ENCODE measurements at regions of chr12 and their contacts with region 1.

Region 1: GRCh38 chr12:85041395-85041794 is 5.2 kb downstream of the LRRIQ1 start:
- DNase-seq: no peak
- H3K4me3 ChIP-seq: no peak overlapping the region
- H3K27ac ChIP-seq: no peak overlapping the region
- H3K27me3 ChIP-seq: no peaks in the 10 kb centered on the region
- CTCF ChIP-seq: no peak

Region 2: DNA sequence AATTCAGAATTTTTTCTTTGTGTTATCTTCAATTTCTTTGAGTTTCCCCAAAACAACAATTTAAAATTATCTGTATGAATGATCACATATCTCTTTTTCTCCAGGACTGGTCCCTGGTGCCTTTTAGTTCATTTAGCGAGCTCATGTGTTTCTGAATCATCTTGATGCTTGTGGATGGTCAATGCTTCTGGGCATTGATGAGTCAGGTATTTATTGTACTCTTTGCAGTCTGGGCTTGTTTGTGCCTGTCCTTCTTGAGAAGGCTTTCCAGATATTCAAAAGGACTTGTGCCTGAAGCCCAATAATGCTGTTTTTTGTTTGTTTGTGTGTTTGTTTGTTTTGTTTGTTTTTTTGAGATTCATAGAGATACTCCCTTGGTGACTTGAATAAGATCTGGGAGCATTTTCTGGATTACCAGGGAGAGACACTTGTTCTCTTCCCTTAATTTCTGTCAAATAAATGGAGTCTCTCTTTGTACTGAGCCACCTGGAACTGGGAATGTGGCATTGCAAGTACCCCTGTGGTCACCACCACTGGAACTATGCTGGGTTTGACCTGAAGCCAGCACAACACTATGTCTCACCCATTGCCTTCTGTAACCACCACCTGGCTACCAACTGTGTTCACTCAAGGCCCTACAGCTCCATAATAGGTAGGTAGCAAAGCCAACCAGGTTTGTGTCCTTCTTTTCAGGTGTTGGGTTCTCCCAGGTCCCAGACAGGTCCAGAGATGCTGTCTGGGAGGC is 185.1 kb before region 1 on chr12:
- CTCF ChIA-PET with region 1: no interaction called
- POLR2A ChIA-PET with region 1: no interaction called
- DNase-seq: no peak
- H3K4me3 ChIP-seq: no peak overlapping the region
- H3K27ac ChIP-seq: no peak overlapping the region
- H3K27me3 ChIP-seq: no peaks in the 10 kb centered on the region
- CTCF ChIP-seq: no peak

Region 3: GRCh38 chr12:84986586-84986985 is 54.8 kb before region 1 on chr12:
- CTCF ChIA-PET with region 1: no interaction called
- POLR2A ChIA-PET with region 1: no interaction called
- DNase-seq: no peak
- H3K4me3 ChIP-seq: no peak overlapping the region
- H3K27ac ChIP-seq: no peak overlapping the region
- H3K27me3 ChIP-seq: no peaks in the 10 kb centered on the region
- CTCF ChIP-seq: no peak

Region 4: GRCh38 chr12:85057370-85057963 is 16.1 kb after region 1 on chr12:
- CTCF ChIA-PET with region 1: interaction called, 34 read pairs
- POLR2A ChIA-PET with region 1: no interaction called
- DNase-seq: peak; percentile 13
- H3K4me3 ChIP-seq: no peak overlapping the region
- H3K27ac ChIP-seq: no peak overlapping the region
- H3K27me3 ChIP-seq: no peaks in the 10 kb centered on the region
- CTCF ChIP-seq: peak; percentile 84

Region 5: DNA sequence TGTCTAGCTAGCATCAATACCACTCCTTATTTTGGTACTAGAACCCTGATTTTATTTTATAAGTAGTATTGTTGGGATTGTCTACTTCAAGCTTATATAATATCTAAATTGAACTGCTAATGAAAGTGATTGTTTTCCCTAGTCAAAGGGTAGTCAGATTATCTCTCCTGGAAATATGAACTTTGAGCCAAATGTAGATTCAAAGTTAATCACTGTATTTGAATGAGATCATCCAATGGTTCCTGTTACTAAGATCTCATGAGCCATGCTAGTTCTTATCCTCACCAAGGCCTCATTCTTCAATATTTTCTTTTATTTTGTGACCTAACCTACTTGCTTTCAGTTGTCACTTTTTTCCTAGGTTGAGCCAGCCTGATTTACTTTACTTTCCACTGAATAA is 518.1 kb after region 1 on chr12:
- CTCF ChIA-PET with region 1: no interaction called
- POLR2A ChIA-PET with region 1: no interaction called
- DNase-seq: no peak
- H3K4me3 ChIP-seq: no peak overlapping the region
- H3K27ac ChIP-seq: no peak overlapping the region
- H3K27me3 ChIP-seq: no peaks in the 10 kb centered on the region
- CTCF ChIP-seq: no peak